ENCODE measurements at regions of chr1 and their contacts with region 1.

Region 1: GRCh38 chr1:199954699-199955098 is 72.8 kb upstream of the NR5A2 start:
- DNase-seq: peak; percentile 53 to 58
- H3K4me3 ChIP-seq: no peak overlapping the region
- H3K4me3 Mint-ChIP-seq: no peak overlapping the region
- H3K27ac Mint-ChIP-seq: no peak overlapping the region
- H3K4me1 ChIP-seq: 0 out of 2 replicates have a peak, but pooled peaks cover 6% of the 10 kb centered on the region
- H3K4me1 Mint-ChIP-seq: peaks cover 7% of the 10 kb centered on the region
- H3K27me3 ChIP-seq: no peaks in the 10 kb centered on the region
- H3K27me3 Mint-ChIP-seq: no peaks in the 10 kb centered on the region
- CTCF ChIP-seq: peak; percentile 59 to 82

Region 2: DNA sequence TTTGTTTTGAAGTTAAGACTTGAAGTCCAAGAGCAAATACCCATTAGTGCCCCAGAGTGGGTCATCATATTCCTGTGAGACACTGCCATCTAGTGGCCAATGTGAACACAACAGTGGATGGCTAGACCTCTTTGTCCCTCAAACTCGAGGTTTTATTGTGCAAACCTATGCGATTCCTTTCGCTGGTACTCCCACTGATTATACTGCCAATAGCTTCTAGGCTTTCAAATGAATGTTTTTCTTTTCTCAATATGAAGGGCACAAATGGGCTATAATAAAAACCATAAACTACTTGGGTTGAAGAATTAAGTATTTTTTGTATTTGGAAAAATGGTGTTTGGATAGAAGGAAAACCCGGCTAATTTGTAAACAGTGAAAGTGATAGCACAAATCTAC is 555.5 kb after region 1 on chr1:
- CTCF ChIA-PET with region 1: interaction called, 5 read pairs
- POLR2A ChIA-PET with region 1: no interaction called
- intact Hi-C with region 1: loop called (anchors 1 kb)
- DNase-seq: peak; percentile 73 to 83
- H3K4me3 ChIP-seq: no peak overlapping the region
- H3K4me3 Mint-ChIP-seq: no peak overlapping the region
- H3K27ac Mint-ChIP-seq: no peak overlapping the region
- H3K4me1 ChIP-seq: 0 out of 2 replicates have a peak, but pooled peaks cover 5% of the 10 kb centered on the region
- H3K4me1 Mint-ChIP-seq: no peaks in the 10 kb centered on the region
- H3K27me3 ChIP-seq: no peaks in the 10 kb centered on the region
- H3K27me3 Mint-ChIP-seq: peaks cover 8% of the 10 kb centered on the region
- CTCF ChIP-seq: peak; percentile 83 to 87

Measured in Caco-2 (cell line).